OCI-LY7 (cell line): ENCODE measurements at regions of chr11 and their contacts with region 1.

Region 1: DNA sequence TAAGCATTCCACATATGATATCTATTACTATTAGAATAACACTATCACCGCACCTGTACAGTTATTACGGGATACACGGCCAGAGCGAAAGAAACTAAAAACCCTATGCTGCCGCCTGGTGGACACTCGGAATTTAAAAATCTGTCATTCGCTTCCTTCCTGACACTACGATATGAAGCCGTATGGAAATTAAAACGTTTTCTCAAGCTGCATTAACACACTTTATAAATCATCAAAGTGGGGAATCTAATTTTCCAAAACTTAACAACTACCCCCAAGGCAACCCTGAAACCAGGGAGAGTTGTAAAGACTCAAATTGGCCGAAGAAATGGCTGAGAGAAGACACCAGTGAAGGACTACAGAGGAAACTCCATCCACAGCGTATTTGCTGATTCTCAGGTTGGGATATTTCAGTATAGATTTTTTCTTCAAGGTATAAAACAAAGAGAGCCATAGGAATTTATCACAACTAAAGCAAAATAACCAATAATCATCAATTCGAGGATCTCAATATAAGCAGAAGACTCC is 1.4 kb downstream of the CCDC73 start:
- DNase-seq: peak; percentile 56
- H3K4me3 ChIP-seq: no peak overlapping the region
- H3K27ac ChIP-seq: no peak overlapping the region
- H3K4me1 ChIP-seq: no peaks in the 10 kb centered on the region
- CTCF ChIP-seq: peak; percentile 94

Region 2: GRCh38 chr11:32323814-32324130 is 469.2 kb before region 1 on chr11:
- CTCF ChIA-PET with region 1: no interaction called
- POLR2A ChIA-PET with region 1: no interaction called
- intact Hi-C with region 1: loop called (anchors 5 kb)
- DNase-seq: no peak
- H3K4me3 ChIP-seq: no peak overlapping the region
- H3K27ac ChIP-seq: no peak overlapping the region
- H3K4me1 ChIP-seq: no peaks in the 10 kb centered on the region
- CTCF ChIP-seq: peak; percentile 22; the same call in 1 of the 2 replicates

Region 3: DNA sequence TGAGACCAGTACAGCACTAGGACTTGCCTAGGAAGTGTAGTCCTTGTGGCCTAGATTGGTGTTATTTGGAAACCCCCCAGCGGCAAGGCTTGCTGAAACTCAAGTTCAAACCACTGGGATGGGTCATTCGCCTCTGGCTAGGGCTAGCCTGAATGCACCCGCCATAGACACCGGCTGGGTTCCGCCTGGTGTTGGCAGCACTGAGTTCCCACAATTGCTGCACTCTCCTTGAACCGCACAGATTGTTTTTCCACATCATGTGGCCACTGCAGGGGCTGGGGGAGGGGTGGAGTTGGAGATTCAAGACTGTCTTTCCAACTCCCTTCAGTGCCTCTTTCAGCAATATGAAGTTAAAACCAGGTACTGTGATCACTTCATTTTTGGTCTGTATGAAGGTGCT is 41.6 kb before region 1 on chr11:
- CTCF ChIA-PET with region 1: interaction called, 3 read pairs
- POLR2A ChIA-PET with region 1: interaction called, 6 read pairs
- intact Hi-C with region 1: loop called (anchors 1 kb)
- DNase-seq: no peak
- H3K4me3 ChIP-seq: no peak overlapping the region
- H3K27ac ChIP-seq: no peak overlapping the region
- H3K4me1 ChIP-seq: no peaks in the 10 kb centered on the region
- CTCF ChIP-seq: no peak

Region 4: GRCh38 chr11:33161120-33162005 is 368.4 kb after region 1 on chr11 and contains the start of gene CSTF3:
- CTCF ChIA-PET with region 1: no interaction called
- POLR2A ChIA-PET with region 1: no interaction called
- intact Hi-C with region 1: no loop called
- DNase-seq: peak; percentile 94
- H3K4me3 ChIP-seq: peak within 1 kb of the TSS; percentile 86
- H3K27ac ChIP-seq: peak within 1 kb of the TSS; percentile 53
- H3K4me1 ChIP-seq: peaks cover 23% of the 10 kb centered on the region
- CTCF ChIP-seq: 0 out of 2 replicates have a peak, but pooled peaks have one; percentile 19
- total RNA-seq, gene CSTF3: 31.9 and 45.1 TPM in 2 replicates